Endothelial cell of umbilical vein (primary cell): ENCODE measurements at regions of chr10 and their contacts with region 1.

Region 1: GRCh38 chr10:65213170-65213569 is 1692.0 kb downstream of the REEP3 start:
- DNase-seq: no peak
- H3K4me3 ChIP-seq: no peak overlapping the region
- H3K27ac ChIP-seq: no peak overlapping the region
- H3K4me1 ChIP-seq: no peaks in the 10 kb centered on the region
- H3K27me3 ChIP-seq: no peaks in the 10 kb centered on the region
- CTCF ChIP-seq: no peak
- POLR2A ChIP-seq: no peak

Region 2: GRCh38 chr10:65194126-65194525 is 19.0 kb before region 1 on chr10:
- CTCF ChIA-PET with region 1: interaction called, 3 read pairs
- POLR2A ChIA-PET with region 1: no interaction called
- dilution Hi-C with region 1: no loop called
- intact Hi-C with region 1: loop called (anchors 1 kb)
- DNase-seq: no peak
- H3K4me3 ChIP-seq: no peak overlapping the region
- H3K27ac ChIP-seq: no peak overlapping the region
- H3K4me1 ChIP-seq: no peaks in the 10 kb centered on the region
- H3K27me3 ChIP-seq: no peaks in the 10 kb centered on the region
- CTCF ChIP-seq: no peak
- POLR2A ChIP-seq: no peak